ENCODE measurements at regions of chr10 and their contacts with region 1.

Region 1: DNA sequence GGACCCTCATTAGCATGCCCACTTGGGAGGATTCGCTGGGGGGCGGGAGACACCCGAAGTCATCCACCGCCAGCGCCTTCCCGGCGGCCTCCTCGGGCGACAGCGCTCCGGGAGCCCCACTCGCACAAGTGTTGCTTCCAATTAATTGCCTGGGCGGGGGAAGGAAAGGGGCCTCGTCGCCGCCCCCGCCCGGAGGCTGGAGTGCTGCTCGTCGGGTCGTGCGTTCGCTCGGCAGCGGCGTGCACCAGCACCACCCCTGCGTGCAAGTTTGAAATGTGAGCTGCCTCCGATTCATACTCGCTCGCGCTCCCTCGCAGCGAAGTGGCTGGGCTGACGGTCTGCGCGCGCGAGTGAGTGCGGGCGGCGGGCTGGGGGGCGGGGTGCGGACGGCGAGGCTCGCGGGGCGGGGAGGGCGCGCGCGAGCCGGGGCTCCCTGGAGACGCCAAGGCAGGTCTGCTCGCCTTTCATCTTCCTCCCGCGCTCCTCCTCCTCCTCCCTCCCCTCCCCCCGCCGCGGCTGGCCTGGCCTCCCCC is 104.6 kb upstream of the PPIF start:
- DNase-seq: peak; percentile 85
- ATAC-seq: peak; percentile 50
- H3K4me3 Mint-ChIP-seq: peak overlapping the region; percentile 74
- H3K27ac Mint-ChIP-seq: peak overlapping the region; percentile 52
- H3K4me1 Mint-ChIP-seq: peaks cover 55% of the 10 kb centered on the region
- H3K27me3 Mint-ChIP-seq: no peaks in the 10 kb centered on the region

Region 2: GRCh38 chr10:78302989-78303854 is 939.5 kb before region 1 on chr10:
- CTCF ChIA-PET with region 1: no interaction called
- POLR2A ChIA-PET with region 1: no interaction called
- intact Hi-C with region 1: loop called in 1 of 2 experiments (anchors 1 kb)
- DNase-seq: peak; percentile 98
- ATAC-seq: peak; percentile 94
- H3K4me3 Mint-ChIP-seq: peak overlapping the region; percentile 79
- H3K27ac Mint-ChIP-seq: peak overlapping the region; percentile 90
- H3K4me1 Mint-ChIP-seq: peaks cover 12% of the 10 kb centered on the region
- H3K27me3 Mint-ChIP-seq: no peaks in the 10 kb centered on the region

Region 3: DNA sequence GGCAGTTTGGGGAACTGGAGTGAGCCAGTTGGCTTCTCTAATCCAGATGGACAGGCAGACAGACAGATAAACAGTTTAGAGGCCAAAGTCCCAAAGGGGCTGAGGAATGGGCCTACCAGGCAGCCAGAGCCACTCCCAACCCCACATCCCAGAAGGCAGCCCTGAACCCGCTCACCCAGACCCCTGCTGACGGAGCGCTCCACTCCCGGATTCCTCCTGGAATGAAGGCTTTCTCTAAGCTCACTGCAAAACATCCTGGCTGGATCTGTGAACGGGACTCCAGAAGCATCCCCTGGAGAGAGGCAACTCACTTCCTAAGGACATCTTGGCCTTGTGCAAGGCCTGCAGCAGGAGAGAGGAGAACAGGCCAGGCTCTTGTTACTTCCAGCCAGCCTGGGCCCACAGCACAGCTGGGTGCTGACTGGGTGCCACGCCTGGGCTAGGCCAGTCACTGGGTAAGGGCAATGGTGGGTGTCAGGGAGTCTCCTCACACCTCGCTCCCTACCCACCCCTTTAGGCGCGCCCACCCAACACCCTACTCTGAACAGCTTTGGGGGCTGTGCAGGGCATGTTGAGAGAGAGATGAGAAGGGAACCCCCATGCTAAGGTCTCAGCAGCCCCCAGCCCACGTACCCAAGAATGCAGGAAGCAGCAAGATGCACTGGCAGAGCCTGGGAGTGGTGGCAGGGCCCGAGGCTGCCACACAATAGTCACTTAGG is 342.5 kb before region 1 on chr10:
- CTCF ChIA-PET with region 1: no interaction called
- POLR2A ChIA-PET with region 1: no interaction called
- intact Hi-C with region 1: no loop called
- DNase-seq: no peak
- ATAC-seq: no peak
- H3K4me3 Mint-ChIP-seq: no peak overlapping the region
- H3K27ac Mint-ChIP-seq: no peak overlapping the region
- H3K4me1 Mint-ChIP-seq: no peaks in the 10 kb centered on the region
- H3K27me3 Mint-ChIP-seq: no peaks in the 10 kb centered on the region

Region 4: DNA sequence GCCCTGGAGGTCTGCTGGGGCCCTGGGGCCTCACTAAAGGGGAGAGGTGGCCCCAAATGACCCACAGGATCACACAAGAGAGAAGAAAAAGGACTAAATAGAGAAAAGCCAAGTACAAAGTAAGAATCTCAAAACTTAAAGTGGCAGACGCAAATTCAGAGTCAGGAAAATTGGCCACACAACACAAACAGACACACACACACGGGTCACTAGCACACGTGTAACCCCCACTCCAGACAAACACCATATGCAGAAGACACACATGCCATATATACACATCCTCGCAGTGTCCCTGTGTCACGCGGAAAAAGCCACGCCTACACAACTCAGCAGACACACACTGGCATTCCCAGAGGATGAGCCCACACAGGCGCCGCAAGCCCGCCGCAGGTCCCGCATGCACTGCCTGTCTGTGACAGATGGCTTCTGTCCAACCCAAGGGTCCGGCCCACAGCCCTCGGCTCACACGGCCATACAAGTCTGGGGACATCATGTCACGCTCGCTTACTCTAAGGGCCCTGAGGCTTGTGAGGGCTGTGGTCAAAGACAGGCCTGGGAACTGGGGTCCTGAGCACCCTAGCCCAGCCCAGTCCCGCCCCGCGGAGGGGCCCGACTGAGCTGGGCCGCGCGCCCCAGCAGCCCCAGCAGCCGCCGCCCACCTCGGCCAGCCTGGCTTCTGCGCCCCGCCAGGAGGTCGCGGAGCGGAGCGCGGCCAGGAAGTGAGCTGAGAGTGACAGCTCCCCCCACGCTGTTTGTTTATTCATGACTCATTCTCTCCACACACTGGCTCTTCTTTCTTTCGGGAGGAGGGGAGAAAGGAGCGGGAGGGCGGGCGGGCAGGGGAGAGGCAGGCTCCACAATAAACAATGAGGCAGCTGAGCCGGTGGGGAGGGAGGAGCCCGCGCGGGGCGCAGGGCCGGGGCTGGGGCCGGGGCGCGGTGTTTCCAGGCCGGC is 269.5 kb before region 1 on chr10:
- CTCF ChIA-PET with region 1: no interaction called
- POLR2A ChIA-PET with region 1: no interaction called
- intact Hi-C with region 1: loop called in 1 of 2 experiments (anchors 1 kb)
- DNase-seq: peak; percentile 86
- ATAC-seq: peak; percentile 63
- H3K4me3 Mint-ChIP-seq: peak overlapping the region; percentile 58
- H3K27ac Mint-ChIP-seq: peak overlapping the region; percentile 77
- H3K4me1 Mint-ChIP-seq: peaks cover 32% of the 10 kb centered on the region
- H3K27me3 Mint-ChIP-seq: peaks cover 2% of the 10 kb centered on the region

Region 5: GRCh38 chr10:79286318-79286951 is 43.7 kb after region 1 on chr10:
- CTCF ChIA-PET with region 1: no interaction called
- POLR2A ChIA-PET with region 1: interaction called, 3 read pairs
- intact Hi-C with region 1: loop called (anchors 1 kb)
- DNase-seq: peak; percentile 92
- ATAC-seq: peak; percentile 88
- H3K4me3 Mint-ChIP-seq: peak overlapping the region; percentile 37
- H3K27ac Mint-ChIP-seq: peak overlapping the region; percentile 85
- H3K4me1 Mint-ChIP-seq: peaks cover 41% of the 10 kb centered on the region
- H3K27me3 Mint-ChIP-seq: no peaks in the 10 kb centered on the region

Region 6: GRCh38 chr10:79331709-79332108 is 89.0 kb after region 1 on chr10:
- CTCF ChIA-PET with region 1: interaction called, 3 read pairs
- POLR2A ChIA-PET with region 1: no interaction called
- intact Hi-C with region 1: loop called in 1 of 2 experiments (anchors 1 kb)
- DNase-seq: peak; percentile 93
- ATAC-seq: peak; percentile 98
- H3K4me3 Mint-ChIP-seq: peak overlapping the region; percentile 9
- H3K27ac Mint-ChIP-seq: peak overlapping the region; percentile 90
- H3K4me1 Mint-ChIP-seq: peaks cover 40% of the 10 kb centered on the region
- H3K27me3 Mint-ChIP-seq: no peaks in the 10 kb centered on the region

Region 7: DNA sequence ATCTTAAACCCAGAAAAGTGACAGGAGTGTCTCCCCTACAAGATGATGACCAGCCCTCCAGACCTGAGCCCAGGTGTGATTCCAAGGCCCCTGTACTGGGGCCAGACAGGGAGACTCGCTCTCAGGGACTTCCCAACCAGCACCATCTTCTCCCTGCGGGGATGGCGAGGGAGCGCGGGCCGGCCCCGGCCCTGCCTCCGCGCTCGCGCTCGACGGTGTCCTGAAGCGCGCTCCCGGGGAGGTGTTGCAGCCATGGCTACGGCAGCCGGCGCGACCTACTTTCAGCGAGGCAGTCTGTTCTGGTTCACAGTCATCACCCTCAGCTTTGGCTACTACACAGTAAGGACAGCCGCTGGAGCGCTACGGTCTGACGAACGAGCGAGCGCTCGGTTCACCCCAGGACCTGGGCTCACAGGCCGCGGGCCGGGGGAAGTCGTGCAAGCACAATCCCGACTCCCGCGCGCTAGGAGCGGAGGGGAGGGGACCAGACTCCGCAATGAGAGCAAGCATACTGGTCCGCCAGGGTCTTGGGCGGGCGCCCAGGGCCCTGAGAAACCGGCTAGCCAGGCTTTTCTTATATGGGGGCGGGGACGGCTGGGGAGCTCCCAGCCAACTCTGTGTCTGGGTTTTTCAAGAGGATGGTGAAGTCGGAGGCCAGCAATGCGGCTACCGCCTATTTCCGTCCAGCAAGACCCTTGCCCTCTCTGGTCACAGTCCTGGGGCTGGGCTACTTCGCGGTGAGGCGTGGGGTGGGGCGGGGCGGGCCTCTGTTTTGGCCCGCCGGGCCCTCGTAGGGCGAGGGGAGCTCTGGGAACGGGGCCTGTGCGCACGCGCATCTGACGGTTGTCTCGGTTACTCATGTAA is 836.0 kb after region 1 on chr10 and contains the start of gene TMEM254:
- CTCF ChIA-PET with region 1: no interaction called
- POLR2A ChIA-PET with region 1: no interaction called
- intact Hi-C with region 1: loop called in 1 of 2 experiments (anchors 2 kb)
- DNase-seq: peak; percentile 95
- ATAC-seq: peak; percentile 74
- H3K4me3 Mint-ChIP-seq: peak within 1 kb of the TSS; percentile 93
- H3K27ac Mint-ChIP-seq: peak within 1 kb of the TSS; percentile 96
- H3K4me1 Mint-ChIP-seq: peaks cover 32% of the 10 kb centered on the region
- H3K27me3 Mint-ChIP-seq: no peaks in the 10 kb centered on the region
- total RNA-seq, gene TMEM254: 11.3 to 15.2 TPM

Measured in activated CD4-positive, alpha-beta T cell treated with anti-CD3 and anti-CD28 coated beads for 36 hours (primary cell).